ENCODE measurements at regions of chr17 and their contacts with region 1.

Region 1: GRCh38 chr17:3004133-3004801 is 59.1 kb downstream of the OR1D5 start:
- DNase-seq: peak; percentile 93 to 99
- H3K4me3 ChIP-seq: no peak overlapping the region
- CTCF ChIP-seq: no peak
- POLR2A ChIP-seq: no peak

Region 2: DNA sequence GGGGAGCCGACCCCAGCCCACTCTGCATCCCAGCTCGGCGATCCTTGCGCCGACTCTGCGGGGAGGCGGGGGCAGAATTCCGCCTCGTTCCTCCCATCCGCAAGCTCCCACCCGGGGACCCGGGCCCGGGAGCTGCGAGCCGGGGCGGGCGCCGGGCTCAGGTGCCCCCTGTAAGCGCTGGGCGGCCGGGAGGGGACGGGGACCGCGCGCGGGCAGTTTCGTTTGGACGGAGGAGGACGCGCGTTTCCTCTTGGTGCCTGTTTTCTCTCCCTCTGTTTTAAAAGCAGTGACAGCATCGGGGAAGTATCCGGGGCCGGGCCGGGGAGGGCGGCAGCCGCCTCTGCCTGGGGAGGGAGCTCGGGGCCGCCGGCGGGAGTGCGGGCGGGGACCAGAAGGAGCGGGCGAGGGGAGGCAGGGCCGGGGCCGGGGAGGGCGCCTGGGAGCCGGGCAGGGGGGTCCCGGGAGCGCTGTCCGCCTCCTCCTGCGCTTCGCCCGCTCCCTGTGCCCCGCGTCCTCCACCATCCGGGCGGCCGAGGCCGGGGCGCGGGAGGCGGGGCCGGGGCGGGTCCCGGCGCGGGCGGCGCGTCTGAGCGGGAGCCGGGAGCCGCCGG is 151.1 kb before region 1 on chr17:
- intact Hi-C with region 1: loop called (anchors 10 kb)
- DNase-seq: peak in 1 of 2 donors; percentile 88
- H3K4me3 ChIP-seq: peak overlapping the region; percentile 37
- CTCF ChIP-seq: no peak
- POLR2A ChIP-seq: no peak